Naive thymus-derived CD4-positive, alpha-beta T cell (primary cell): ENCODE measurements at regions of chr1 and their contacts with region 1.

Region 1: GRCh38 chr1:248596615-248597014 is 885 bp downstream of the OR2T10 start:
- DNase-seq: no peak
- ATAC-seq: no peak
- H3K4me3 ChIP-seq: no peak overlapping the region
- H3K4me3 Mint-ChIP-seq: no peak overlapping the region
- H3K27ac ChIP-seq: no peak overlapping the region
- H3K27ac Mint-ChIP-seq: no peak overlapping the region
- H3K4me1 ChIP-seq: no peaks in the 10 kb centered on the region
- H3K4me1 Mint-ChIP-seq: peaks cover 0 to 11% (median 7%) of the 10 kb centered on the region in 7 donors
- H3K27me3 ChIP-seq: no peaks in the 10 kb centered on the region
- H3K27me3 Mint-ChIP-seq: no peaks in the 10 kb centered on the region

Region 2: DNA sequence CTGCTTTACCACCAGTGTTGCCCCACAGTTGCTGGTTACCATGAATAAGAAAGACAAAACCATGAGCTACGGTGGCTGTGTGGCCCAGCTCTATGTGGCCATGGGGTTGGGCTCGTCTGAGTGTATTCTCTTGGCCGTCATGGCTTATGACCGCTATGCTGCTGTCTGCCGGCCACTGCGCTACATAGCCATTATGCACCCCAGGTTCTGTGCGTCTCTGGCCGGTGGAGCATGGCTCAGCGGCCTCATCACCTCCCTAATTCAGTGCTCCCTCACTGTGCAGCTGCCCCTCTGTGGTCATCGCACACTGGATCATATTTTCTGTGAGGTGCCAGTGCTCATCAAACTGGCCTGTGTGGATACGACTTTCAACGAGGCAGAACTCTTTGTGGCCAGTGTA is 74.8 kb before region 1 on chr1:
- CTCF ChIA-PET with region 1: no interaction called
- POLR2A ChIA-PET with region 1: no interaction called
- intact Hi-C with region 1: loop called in 1 of 2 experiments (anchors 10 kb)
- DNase-seq: no peak
- ATAC-seq: no peak
- H3K4me3 ChIP-seq: no peak overlapping the region
- H3K4me3 Mint-ChIP-seq: no peak overlapping the region
- H3K27ac ChIP-seq: no peak overlapping the region
- H3K27ac Mint-ChIP-seq: no peak overlapping the region
- H3K4me1 ChIP-seq: no peaks in the 10 kb centered on the region
- H3K4me1 Mint-ChIP-seq: peaks cover 0 to 1% (median 0%) of the 10 kb centered on the region in 7 donors
- H3K27me3 ChIP-seq: no peaks in the 10 kb centered on the region
- H3K27me3 Mint-ChIP-seq: peaks cover 0 to 5% (median 0%) of the 10 kb centered on the region in 5 donors

Region 3: GRCh38 chr1:248611883-248612414 is 15.3 kb after region 1 on chr1:
- CTCF ChIA-PET with region 1: no interaction called
- POLR2A ChIA-PET with region 1: no interaction called
- intact Hi-C with region 1: no loop called
- DNase-seq: peak in 4 of 9 donors; percentile 11 to 33 (median 20)
- ATAC-seq: no peak
- H3K4me3 ChIP-seq: no peak overlapping the region
- H3K4me3 Mint-ChIP-seq: no peak overlapping the region
- H3K27ac ChIP-seq: no peak overlapping the region
- H3K27ac Mint-ChIP-seq: peak overlapping the region in 3 of 9 donors; percentile 5 to 57 (median 25)
- H3K4me1 ChIP-seq: no peaks in the 10 kb centered on the region
- H3K4me1 Mint-ChIP-seq: peaks cover 0 to 31% (median 5%) of the 10 kb centered on the region in 7 donors
- H3K27me3 ChIP-seq: no peaks in the 10 kb centered on the region
- H3K27me3 Mint-ChIP-seq: no peaks in the 10 kb centered on the region